Activated CD4-positive, alpha-beta T cell treated with anti-CD3 and anti-CD28 coated beads, Interleukin-2, amount 10 ng/mL, durations not matched to agents 7 days and 5 days (primary cell): ENCODE measurements at regions of chr12 and their contacts with region 1.

Region 1: GRCh38 chr12:124466216-124467128 is 100.9 kb downstream of the NCOR2 start:
- DNase-seq: peak; percentile 89
- H3K4me3 Mint-ChIP-seq: peak overlapping the region; percentile 55
- H3K27ac Mint-ChIP-seq: peak overlapping the region; percentile 89
- H3K4me1 Mint-ChIP-seq: peaks cover 50% of the 10 kb centered on the region
- H3K27me3 Mint-ChIP-seq: no peaks in the 10 kb centered on the region

Region 2: GRCh38 chr12:124359671-124360581 is 106.5 kb before region 1 on chr12:
- CTCF ChIA-PET with region 1: no interaction called
- POLR2A ChIA-PET with region 1: no interaction called
- DNase-seq: no peak
- H3K4me3 Mint-ChIP-seq: no peak overlapping the region
- H3K27ac Mint-ChIP-seq: no peak overlapping the region
- H3K4me1 Mint-ChIP-seq: no peaks in the 10 kb centered on the region
- H3K27me3 Mint-ChIP-seq: no peaks in the 10 kb centered on the region

Region 3: DNA sequence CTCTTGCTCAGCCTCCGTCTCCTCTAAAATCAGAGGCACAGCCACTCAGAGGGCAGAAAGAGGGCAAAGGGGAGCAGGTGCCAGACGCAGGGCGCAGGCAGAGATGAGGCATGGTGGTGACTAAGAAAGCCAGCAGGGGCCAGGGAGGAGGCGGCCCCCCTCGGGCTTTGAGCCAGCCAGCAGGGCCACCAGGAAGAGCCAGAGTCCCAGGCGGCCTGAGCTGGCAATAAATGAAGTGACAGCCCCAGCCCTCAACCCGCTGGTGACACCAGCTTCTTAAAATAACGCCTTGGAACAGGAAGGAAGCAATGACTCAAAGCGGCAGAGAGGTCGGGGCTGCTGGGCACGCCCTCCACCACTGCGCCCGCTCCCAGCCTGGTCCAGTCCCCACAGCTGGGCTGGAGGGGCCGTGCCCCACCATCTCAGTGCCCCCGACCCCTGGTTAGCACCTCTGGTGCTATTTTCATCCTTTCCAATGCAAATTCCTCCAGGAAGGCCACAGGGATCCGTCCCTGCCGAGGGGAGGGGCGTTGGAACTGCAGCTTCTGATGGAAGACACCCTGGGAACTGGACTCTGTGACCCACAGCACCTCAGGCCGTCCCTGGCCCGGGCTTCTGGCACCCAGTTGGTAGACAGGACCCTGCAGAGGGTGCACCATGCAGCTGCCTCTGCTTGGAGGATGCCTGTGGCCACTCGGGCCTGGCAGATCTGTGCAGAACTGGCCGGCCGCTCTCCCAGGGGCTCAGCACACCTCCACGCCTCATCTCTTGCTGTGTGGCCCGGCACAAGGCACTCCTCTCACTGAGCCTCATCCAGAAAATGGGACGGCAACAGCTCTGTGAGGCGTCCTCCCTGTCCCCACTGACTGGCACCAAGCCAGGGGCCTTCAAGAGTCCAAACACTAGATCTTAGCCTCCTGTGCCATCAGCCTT is 12.8 kb before region 1 on chr12:
- CTCF ChIA-PET with region 1: interaction called, 29 read pairs
- POLR2A ChIA-PET with region 1: interaction called, 6 read pairs
- DNase-seq: peak; percentile 85
- H3K4me3 Mint-ChIP-seq: peak overlapping the region; percentile 52
- H3K27ac Mint-ChIP-seq: peak overlapping the region; percentile 91
- H3K4me1 Mint-ChIP-seq: peaks cover 64% of the 10 kb centered on the region
- H3K27me3 Mint-ChIP-seq: no peaks in the 10 kb centered on the region